CD8-positive, alpha-beta T cell (primary cell): ENCODE measurements at regions of chr4 and their contacts with region 1.

Region 1: DNA sequence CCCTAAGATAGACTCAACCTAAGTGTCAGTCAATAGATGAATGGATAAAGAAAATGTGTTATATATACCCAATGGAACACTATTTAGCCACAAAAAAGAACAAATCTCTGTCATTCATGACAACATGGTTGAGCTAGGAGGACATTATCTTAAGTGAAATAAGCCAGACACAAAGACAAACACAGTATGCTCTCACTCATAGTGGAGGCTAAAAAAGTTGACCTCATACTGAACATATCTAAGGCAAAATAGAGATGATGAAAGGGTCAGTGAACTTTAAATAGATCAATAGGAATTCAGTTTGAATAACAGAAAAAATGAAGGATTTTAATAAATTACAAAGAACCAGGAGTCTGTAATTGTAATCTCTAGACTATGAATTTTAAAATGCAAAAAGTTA is 106.5 kb downstream of the SOWAHB start:
- DNase-seq: no peak
- ATAC-seq: no peak
- H3K4me3 ChIP-seq: no peak overlapping the region
- H3K4me3 Mint-ChIP-seq: no peak overlapping the region
- H3K27ac ChIP-seq: no peak overlapping the region
- H3K27ac Mint-ChIP-seq: no peak overlapping the region
- H3K4me1 ChIP-seq: no peaks in the 10 kb centered on the region
- H3K4me1 Mint-ChIP-seq: no peaks in the 10 kb centered on the region
- H3K27me3 ChIP-seq: no peaks in the 10 kb centered on the region
- H3K27me3 Mint-ChIP-seq: no peaks in the 10 kb centered on the region
- CTCF ChIP-seq: no peak

Region 2: GRCh38 chr4:74790652-74791443 is 2000.6 kb before region 1 on chr4:
- CTCF ChIA-PET with region 1: no interaction called
- POLR2A ChIA-PET with region 1: no interaction called
- intact Hi-C with region 1: no loop called
- DNase-seq: no peak
- ATAC-seq: no peak
- H3K4me3 ChIP-seq: no peak overlapping the region
- H3K4me3 Mint-ChIP-seq: no peak overlapping the region
- H3K27ac ChIP-seq: no peak overlapping the region
- H3K27ac Mint-ChIP-seq: no peak overlapping the region
- H3K4me1 ChIP-seq: no peaks in the 10 kb centered on the region
- H3K4me1 Mint-ChIP-seq: no peaks in the 10 kb centered on the region
- H3K27me3 ChIP-seq: peaks cover 2 to 7% of the 10 kb centered on the region in 2 experiments
- H3K27me3 Mint-ChIP-seq: peaks cover 33% of the 10 kb centered on the region
- CTCF ChIP-seq: no peak

Region 3: GRCh38 chr4:76836860-76837562 is 45.5 kb after region 1 on chr4:
- CTCF ChIA-PET with region 1: no interaction called
- POLR2A ChIA-PET with region 1: no interaction called
- intact Hi-C with region 1: loop called in 1 of 2 experiments (anchors 1 kb)
- DNase-seq: no peak
- ATAC-seq: no peak
- H3K4me3 ChIP-seq: no peak overlapping the region
- H3K4me3 Mint-ChIP-seq: no peak overlapping the region
- H3K27ac ChIP-seq: no peak overlapping the region
- H3K27ac Mint-ChIP-seq: no peak overlapping the region
- H3K4me1 ChIP-seq: no peaks in the 10 kb centered on the region
- H3K4me1 Mint-ChIP-seq: no peaks in the 10 kb centered on the region
- H3K27me3 ChIP-seq: no peaks in the 10 kb centered on the region
- H3K27me3 Mint-ChIP-seq: no peaks in the 10 kb centered on the region
- CTCF ChIP-seq: no peak